ENCODE measurements at regions of chr5 and their contacts with region 1.

Region 1: DNA sequence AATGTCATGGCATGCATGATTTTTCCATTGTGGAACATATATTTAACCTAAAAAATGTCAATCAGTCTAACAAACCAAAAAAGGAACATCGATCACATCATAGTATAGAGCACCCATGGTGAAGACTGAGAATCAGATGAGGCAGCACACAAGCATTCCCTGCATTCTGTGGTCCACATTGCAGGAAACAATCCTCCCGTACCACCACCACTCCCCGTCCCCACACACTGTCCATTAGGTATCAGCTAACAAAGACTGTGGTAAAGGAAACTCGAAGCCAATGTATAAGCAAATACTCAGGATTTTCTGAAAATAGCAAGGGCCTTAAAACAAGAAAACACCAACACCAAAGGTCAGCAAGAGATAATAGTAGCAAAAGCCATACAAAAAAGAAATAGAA is 1104.4 kb upstream of the SEMA6A start:
- DNase-seq: no peak
- ATAC-seq: no peak
- H3K4me3 ChIP-seq: no peak overlapping the region
- H3K27ac ChIP-seq: no peak overlapping the region
- H3K4me1 ChIP-seq: 0 out of 2 replicates have a peak, but pooled peaks cover 1% of the 10 kb centered on the region
- H3K27me3 ChIP-seq: no peaks in the 10 kb centered on the region
- CTCF ChIP-seq: no peak
- POLR2A ChIP-seq: no peak
- RAD21 ChIP-seq: no peak

Region 2: GRCh38 chr5:116930616-116931015 is 748.4 kb before region 1 on chr5:
- CTCF ChIA-PET with region 1: no interaction called
- POLR2A ChIA-PET with region 1: no interaction called
- dilution Hi-C with region 1: no loop called
- in situ Hi-C with region 1: no loop called
- intact Hi-C with region 1: no loop called
- DNase-seq: no peak
- ATAC-seq: no peak
- H3K4me3 ChIP-seq: no peak overlapping the region
- H3K27ac ChIP-seq: no peak overlapping the region
- H3K4me1 ChIP-seq: no peaks in the 10 kb centered on the region
- H3K27me3 ChIP-seq: no peaks in the 10 kb centered on the region
- CTCF ChIP-seq: no peak
- POLR2A ChIP-seq: no peak
- RAD21 ChIP-seq: no peak

Region 3: DNA sequence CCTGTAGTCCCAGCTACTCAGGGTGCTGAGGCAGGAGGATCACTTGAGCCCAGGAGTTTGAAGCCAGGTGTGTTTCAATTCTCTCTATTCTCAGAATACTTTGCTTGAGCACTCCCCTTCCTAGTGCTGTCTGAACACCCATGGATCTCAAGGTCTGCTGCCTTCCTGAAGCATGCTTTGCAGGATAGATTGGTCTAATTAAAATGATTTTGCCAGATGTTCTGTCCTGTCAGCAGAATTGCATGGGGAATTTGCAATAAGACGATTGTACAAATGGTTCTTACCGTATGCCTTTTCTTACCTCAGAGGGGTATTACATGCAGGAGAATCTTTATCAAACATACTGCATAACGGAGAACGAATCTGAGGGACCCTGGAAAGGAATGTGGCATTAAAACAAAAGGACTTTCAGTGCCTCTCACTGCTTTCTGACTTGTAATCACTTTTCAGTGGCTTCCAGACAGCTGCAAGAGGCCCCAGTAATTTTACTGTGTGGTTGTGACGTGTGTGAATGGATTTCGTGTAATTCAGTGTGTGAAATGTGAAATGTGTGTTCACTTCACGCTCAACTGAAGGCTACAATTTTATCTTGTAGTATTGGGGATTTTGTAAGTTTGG is 517.2 kb before region 1 on chr5:
- CTCF ChIA-PET with region 1: no interaction called
- POLR2A ChIA-PET with region 1: no interaction called
- dilution Hi-C with region 1: no loop called
- in situ Hi-C with region 1: no loop called
- intact Hi-C with region 1: loop called (anchors 5 kb)
- DNase-seq: no peak
- ATAC-seq: no peak
- H3K4me3 ChIP-seq: no peak overlapping the region
- H3K27ac ChIP-seq: no peak overlapping the region
- H3K4me1 ChIP-seq: no peaks in the 10 kb centered on the region
- H3K27me3 ChIP-seq: no peaks in the 10 kb centered on the region
- CTCF ChIP-seq: no peak
- POLR2A ChIP-seq: no peak
- RAD21 ChIP-seq: no peak

Region 4: DNA sequence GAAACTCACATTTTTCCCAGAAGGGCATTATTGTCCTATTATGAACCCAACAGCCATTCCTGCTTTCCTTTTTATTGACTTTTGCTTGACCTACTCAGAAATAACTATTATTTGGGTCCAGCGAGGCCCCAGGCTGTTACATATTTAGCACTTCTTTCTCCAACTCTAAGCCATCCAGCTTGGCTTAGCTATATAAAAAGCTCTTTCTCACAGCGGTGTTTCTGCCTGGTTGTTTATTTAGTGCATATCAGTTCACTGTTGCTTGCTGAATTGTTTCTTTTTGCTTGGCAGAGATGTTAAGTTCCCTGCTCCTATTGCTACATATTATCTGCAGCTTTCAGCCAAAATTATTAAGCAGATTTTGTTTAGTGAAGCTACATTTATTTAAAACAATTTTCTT is 52.4 kb after region 1 on chr5:
- CTCF ChIA-PET with region 1: no interaction called
- POLR2A ChIA-PET with region 1: no interaction called
- dilution Hi-C with region 1: no loop called
- in situ Hi-C with region 1: no loop called
- intact Hi-C with region 1: no loop called
- DNase-seq: peak; percentile 22
- ATAC-seq: peak; percentile 83
- H3K4me3 ChIP-seq: no peak overlapping the region
- H3K27ac ChIP-seq: no peak overlapping the region
- H3K4me1 ChIP-seq: no peaks in the 10 kb centered on the region
- H3K27me3 ChIP-seq: no peaks in the 10 kb centered on the region
- CTCF ChIP-seq: no peak
- POLR2A ChIP-seq: no peak
- RAD21 ChIP-seq: no peak

Measured in IMR-90 (cell line).